ENCODE measurements at regions of chr16 and their contacts with region 1.

Region 1: DNA sequence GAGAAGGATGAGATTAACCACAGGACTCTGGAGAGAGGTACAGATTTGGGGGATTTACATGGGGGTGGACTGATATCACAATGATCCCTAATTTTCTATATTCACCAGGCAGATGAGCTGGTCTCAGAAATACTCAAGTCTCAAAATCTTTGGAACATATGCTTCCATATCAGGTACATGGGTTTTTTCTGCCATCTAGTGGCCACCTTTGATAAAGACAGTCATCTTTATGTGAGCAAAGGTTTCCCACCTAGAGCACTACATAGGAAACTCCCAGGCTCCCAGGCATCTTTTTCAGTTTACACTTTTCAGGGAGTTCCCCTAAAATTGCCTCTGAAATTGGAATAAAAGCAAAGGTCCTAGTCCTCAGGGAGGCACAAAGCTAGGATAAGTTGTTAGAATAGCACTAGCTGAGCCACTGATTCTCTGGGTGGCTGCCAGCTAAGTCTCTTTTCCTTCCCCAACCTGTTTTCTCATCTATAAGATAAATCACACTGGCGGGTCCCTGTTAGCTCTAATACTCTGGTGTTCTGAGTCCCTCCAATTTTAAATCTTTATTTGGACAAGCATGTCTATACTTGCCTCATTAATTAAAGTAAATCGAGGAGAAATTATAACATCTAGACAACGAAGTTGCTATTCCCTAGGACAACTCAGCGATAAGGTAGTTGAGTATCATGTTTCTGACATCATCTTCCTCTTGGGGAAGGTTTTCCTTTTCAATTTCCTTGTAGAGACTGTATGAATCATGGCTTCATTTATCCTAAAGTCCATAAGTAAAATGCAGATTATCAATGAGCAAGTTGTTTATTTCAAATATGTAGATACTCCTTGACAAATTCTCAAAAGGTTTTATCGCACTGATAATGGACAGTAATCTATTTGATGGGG is 19.0 kb upstream of the MON1B start:
- DNase-seq: no peak
- H3K4me3 ChIP-seq: no peak overlapping the region
- H3K27ac ChIP-seq: no peak overlapping the region
- H3K4me1 ChIP-seq: no peaks in the 10 kb centered on the region
- H3K27me3 ChIP-seq: peaks cover 0 to 36% of the 10 kb centered on the region in 2 donors
- CTCF ChIP-seq: peak; percentile 60 to 68

Region 2: GRCh38 chr16:75789237-75789636 is 1382.8 kb before region 1 on chr16:
- intact Hi-C with region 1: loop called (anchors 2 kb)
- DNase-seq: no peak
- H3K4me3 ChIP-seq: no peak overlapping the region
- H3K27ac ChIP-seq: no peak overlapping the region
- H3K4me1 ChIP-seq: no peaks in the 10 kb centered on the region
- H3K27me3 ChIP-seq: no peaks in the 10 kb centered on the region
- CTCF ChIP-seq: peak; percentile 75 to 76

Measured in tibial artery (tissue), 4 donors.